B cell (primary cell): ENCODE measurements at regions of chr1 and their contacts with region 1.

Region 1: DNA sequence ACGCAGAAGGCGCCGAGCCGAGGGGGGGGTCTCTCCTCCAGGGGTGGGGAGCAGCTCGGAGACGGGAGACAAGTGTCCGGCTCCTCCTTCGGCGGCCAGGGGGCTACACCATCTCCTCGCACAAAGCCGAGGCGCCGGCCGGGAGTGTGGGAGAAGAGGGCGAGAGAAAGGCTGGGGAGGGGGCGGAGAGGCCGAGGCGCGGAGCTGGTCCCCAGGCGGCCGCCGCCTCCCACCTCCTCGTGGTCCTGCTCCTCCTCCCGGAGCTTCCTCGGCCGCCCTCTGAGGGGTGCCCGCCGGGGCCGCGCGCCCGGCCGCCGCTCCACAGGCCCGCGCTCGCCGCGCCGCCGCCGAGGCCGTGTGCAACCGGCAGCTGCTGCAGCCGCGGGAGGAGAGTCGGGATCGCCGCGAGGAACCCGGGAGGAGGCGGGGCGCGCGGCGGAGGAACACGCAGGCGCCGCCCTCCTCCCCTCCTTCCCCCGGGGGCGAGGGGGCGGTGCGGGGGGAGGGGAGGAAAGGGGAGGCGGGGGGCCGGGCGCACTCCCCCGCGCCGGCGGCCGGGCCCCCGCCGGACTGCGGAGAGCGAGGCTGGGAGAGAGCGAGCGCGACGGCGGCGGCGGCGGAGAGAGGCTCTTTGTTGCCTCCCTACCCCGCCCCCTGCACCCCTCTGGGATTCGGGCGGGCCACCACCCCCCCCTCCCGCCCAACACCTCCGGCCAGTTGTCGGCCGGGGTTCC is at the start of gene ENAH:
- DNase-seq: peak; percentile 58
- ATAC-seq: peak; percentile 82
- H3K4me3 ChIP-seq: peak within 1 kb of the TSS; percentile 57 to 79 (median 71)
- H3K4me3 Mint-ChIP-seq: peak within 1 kb of the TSS; percentile 95
- H3K27ac ChIP-seq: peak within 1 kb of the TSS in 1 of 2 donors; percentile 31
- H3K27ac Mint-ChIP-seq: peak within 1 kb of the TSS; percentile 47
- H3K4me1 ChIP-seq: peaks cover 9 to 19% of the 10 kb centered on the region in 2 donors
- H3K4me1 Mint-ChIP-seq: peaks cover 13% of the 10 kb centered on the region
- H3K27me3 ChIP-seq: peaks cover 0 to 10% (median 6%) of the 10 kb centered on the region in 4 experiments
- H3K27me3 Mint-ChIP-seq: peaks cover 24% of the 10 kb centered on the region
- CTCF ChIP-seq: no peak
- total RNA-seq, gene ENAH: 1.3 and 1.6 TPM in 2 replicates

Region 2: DNA sequence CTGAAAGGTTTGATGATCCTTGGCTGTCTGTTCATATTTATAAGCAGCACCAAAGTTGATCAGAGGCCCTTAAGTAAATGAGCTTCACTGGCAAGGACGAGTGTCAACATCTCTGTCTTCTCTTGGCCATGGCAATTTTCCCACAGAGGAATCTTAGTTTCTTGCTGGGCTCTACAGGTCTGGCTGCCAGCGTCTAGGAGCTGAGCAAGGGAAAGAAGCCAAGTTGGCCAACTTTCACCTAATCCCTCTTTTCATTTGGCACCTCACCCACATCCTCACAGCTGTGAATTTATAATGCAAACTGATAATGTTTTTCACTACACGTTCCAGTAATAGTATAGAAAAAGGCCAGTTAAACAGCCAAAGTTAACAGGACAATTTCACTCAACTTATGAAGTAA is 126.0 kb before region 1 on chr1:
- CTCF ChIA-PET with region 1: no interaction called
- POLR2A ChIA-PET with region 1: no interaction called
- intact Hi-C with region 1: no loop called
- DNase-seq: no peak
- ATAC-seq: no peak
- H3K4me3 ChIP-seq: no peak overlapping the region
- H3K4me3 Mint-ChIP-seq: no peak overlapping the region
- H3K27ac ChIP-seq: no peak overlapping the region
- H3K27ac Mint-ChIP-seq: no peak overlapping the region
- H3K4me1 ChIP-seq: no peaks in the 10 kb centered on the region
- H3K4me1 Mint-ChIP-seq: no peaks in the 10 kb centered on the region
- H3K27me3 ChIP-seq: no peaks in the 10 kb centered on the region
- H3K27me3 Mint-ChIP-seq: peaks cover 5% of the 10 kb centered on the region
- CTCF ChIP-seq: no peak

Region 3: DNA sequence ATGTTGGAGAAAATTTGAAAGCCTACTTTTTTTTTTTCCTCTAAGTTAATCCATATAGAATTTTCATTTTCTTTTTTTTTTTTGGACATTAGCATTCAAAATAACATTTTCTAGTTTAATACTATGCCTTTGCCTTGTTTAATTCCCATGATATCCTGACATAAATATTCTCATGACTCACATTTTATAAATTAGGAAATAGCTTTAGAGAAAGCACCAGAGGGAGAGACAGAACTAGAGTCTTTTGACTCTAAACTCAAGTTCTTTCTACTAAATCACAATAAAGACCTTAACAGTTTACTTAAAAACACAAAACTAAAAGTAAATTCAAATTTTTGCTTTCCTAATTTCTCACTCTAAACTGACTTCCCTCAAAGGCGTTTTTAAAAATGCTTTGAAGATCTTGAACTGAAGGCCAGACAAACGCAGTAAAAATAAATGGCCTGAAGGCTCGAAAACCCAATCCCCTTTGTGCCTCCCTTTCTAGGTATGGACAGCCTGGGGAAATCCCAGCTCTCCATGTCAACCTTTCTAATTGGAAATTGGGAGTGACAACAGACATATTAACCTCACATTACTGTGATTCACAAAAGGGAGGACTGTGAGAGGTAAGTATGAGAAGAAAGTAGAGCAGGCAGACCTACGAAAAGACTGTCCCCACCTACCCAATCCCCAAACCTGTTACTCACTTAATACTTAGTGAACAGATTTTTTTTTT is 104.6 kb before region 1 on chr1:
- CTCF ChIA-PET with region 1: interaction called, 3 read pairs
- POLR2A ChIA-PET with region 1: no interaction called
- intact Hi-C with region 1: loop called (anchors 10 kb)
- DNase-seq: no peak
- ATAC-seq: no peak
- H3K4me3 ChIP-seq: no peak overlapping the region
- H3K4me3 Mint-ChIP-seq: no peak overlapping the region
- H3K27ac ChIP-seq: no peak overlapping the region
- H3K27ac Mint-ChIP-seq: no peak overlapping the region
- H3K4me1 ChIP-seq: no peaks in the 10 kb centered on the region
- H3K4me1 Mint-ChIP-seq: no peaks in the 10 kb centered on the region
- H3K27me3 ChIP-seq: no peaks in the 10 kb centered on the region
- H3K27me3 Mint-ChIP-seq: peaks cover 3% of the 10 kb centered on the region
- CTCF ChIP-seq: no peak

Region 4: GRCh38 chr1:225559326-225559725 is 93.6 kb before region 1 on chr1:
- CTCF ChIA-PET with region 1: no interaction called
- POLR2A ChIA-PET with region 1: no interaction called
- intact Hi-C with region 1: no loop called
- DNase-seq: no peak
- ATAC-seq: no peak
- H3K4me3 ChIP-seq: no peak overlapping the region
- H3K4me3 Mint-ChIP-seq: no peak overlapping the region
- H3K27ac ChIP-seq: no peak overlapping the region
- H3K27ac Mint-ChIP-seq: no peak overlapping the region
- H3K4me1 ChIP-seq: no peaks in the 10 kb centered on the region
- H3K4me1 Mint-ChIP-seq: no peaks in the 10 kb centered on the region
- H3K27me3 ChIP-seq: peaks cover 0 to 4% (median 0%) of the 10 kb centered on the region in 4 experiments
- H3K27me3 Mint-ChIP-seq: peaks cover 9% of the 10 kb centered on the region
- CTCF ChIP-seq: no peak

Region 5: GRCh38 chr1:225685476-225686176 is 32.7 kb after region 1 on chr1:
- CTCF ChIA-PET with region 1: no interaction called
- POLR2A ChIA-PET with region 1: interaction called, 10 read pairs
- intact Hi-C with region 1: no loop called
- DNase-seq: no peak
- ATAC-seq: no peak
- H3K4me3 ChIP-seq: no peak overlapping the region
- H3K4me3 Mint-ChIP-seq: no peak overlapping the region
- H3K27ac ChIP-seq: no peak overlapping the region
- H3K27ac Mint-ChIP-seq: no peak overlapping the region
- H3K4me1 ChIP-seq: peaks cover 9 to 12% of the 10 kb centered on the region in 2 donors
- H3K4me1 Mint-ChIP-seq: peaks cover 17% of the 10 kb centered on the region
- H3K27me3 ChIP-seq: peaks cover 0 to 3% (median 0%) of the 10 kb centered on the region in 4 experiments
- H3K27me3 Mint-ChIP-seq: peaks cover 15% of the 10 kb centered on the region
- CTCF ChIP-seq: no peak

Region 6: DNA sequence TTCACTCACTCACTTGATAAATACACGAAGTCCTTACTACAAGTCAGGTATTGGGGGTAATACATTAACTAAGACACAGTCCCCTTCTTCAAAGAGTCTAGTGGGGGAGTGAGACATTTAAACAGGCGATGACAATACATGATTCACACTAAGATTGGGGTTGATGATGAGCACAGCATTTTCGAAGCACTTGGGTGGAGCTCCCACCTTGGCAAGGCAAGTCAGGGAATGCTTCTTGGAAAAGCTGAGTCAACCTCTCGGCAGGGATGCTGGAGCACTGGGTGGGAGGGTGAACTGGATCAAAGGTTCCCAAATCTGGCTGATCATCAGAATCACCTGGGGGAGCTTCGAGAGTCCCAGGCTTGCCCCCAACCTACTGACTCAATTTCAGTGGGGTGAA is 57.9 kb after region 1 on chr1:
- CTCF ChIA-PET with region 1: no interaction called
- POLR2A ChIA-PET with region 1: no interaction called
- intact Hi-C with region 1: no loop called
- DNase-seq: no peak
- ATAC-seq: no peak
- H3K4me3 ChIP-seq: no peak overlapping the region
- H3K4me3 Mint-ChIP-seq: no peak overlapping the region
- H3K27ac ChIP-seq: no peak overlapping the region
- H3K27ac Mint-ChIP-seq: no peak overlapping the region
- H3K4me1 ChIP-seq: no peaks in the 10 kb centered on the region
- H3K4me1 Mint-ChIP-seq: no peaks in the 10 kb centered on the region
- H3K27me3 ChIP-seq: no peaks in the 10 kb centered on the region
- H3K27me3 Mint-ChIP-seq: peaks cover 6% of the 10 kb centered on the region
- CTCF ChIP-seq: no peak